Astrocyte of the cerebellum (primary cell): ENCODE measurements at regions of chr20 and their contacts with region 1.

Region 1: GRCh38 chr20:24406750-24407510 is 62.5 kb upstream of the SYNDIG1 start:
- DNase-seq: no peak
- H3K4me3 ChIP-seq: no peak overlapping the region
- CTCF ChIP-seq: no peak

Region 2: GRCh38 chr20:24309596-24309995 is 97.3 kb before region 1 on chr20:
- in situ Hi-C with region 1: no loop called
- DNase-seq: no peak
- H3K4me3 ChIP-seq: no peak overlapping the region
- CTCF ChIP-seq: no peak

Region 3: GRCh38 chr20:24350923-24351368 is 56.0 kb before region 1 on chr20:
- in situ Hi-C with region 1: loop called (anchors 5 kb)
- DNase-seq: no peak
- H3K4me3 ChIP-seq: no peak overlapping the region
- CTCF ChIP-seq: no peak

Region 4: DNA sequence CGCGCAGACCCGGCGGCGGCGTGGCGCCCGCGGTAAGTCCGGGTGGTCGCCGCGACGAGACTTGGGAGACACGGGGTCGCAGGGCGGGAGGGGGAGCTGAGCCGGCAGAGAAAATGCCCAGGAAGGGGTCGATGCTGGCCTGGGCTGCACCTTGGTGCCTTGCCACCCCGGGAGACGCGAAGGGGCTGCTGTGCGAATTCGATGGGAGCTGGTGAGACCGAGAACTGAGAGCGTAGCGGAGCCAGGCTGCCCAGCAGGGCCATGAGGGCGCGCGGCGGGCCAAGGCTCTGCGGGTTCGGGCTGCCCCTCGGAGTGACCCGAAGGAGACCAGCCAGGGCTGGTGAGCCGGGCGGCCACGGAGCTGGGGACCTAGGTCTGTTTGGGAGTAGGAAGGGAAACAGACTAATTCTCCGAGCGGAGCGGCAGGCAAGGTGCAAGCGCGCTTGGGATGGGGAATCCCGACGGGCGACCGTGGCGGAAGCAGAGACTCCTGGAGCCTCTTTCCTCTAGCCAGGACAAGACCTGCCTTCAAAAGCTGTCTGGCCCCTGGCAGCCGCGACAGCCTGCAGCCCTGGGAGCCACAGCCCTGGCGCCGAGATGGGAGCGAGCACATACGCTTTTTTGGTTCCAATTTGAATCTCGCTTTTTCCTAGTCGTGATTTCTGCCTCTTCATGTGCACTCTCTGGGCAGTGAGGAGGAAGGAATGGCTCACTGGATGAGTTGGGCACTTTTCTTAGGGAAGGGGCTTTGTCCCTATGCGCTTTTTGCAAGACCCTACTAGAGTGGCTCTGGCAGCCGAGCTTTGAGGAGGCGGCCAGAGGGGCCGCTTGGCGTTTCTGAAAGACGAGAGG is 63.2 kb after region 1 on chr20:
- in situ Hi-C with region 1: loop called (anchors 5 kb)
- DNase-seq: no peak
- H3K4me3 ChIP-seq: peak overlapping the region; percentile 56
- CTCF ChIP-seq: no peak